AG04449 (cell line): ENCODE measurements at regions of chr1 and their contacts with region 1.

Region 1: DNA sequence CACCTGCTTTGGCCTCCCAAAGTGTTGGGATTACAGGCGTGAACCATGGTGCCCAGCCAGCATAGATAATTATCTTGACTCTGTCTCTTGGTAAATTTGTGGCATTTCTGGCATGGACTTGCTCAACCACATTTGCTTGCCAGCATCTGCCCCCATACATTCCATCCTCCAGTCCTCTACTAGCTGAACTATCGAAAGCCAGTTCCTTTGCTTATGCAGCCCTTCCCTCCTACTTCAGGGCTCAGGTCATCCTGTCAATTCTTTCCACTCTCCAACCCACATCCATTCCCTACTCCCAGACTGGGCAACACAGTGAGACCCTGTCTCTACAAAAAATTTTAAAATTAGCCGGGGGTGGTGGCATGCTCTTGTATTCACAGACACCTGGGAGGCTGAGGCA is 13.0 kb upstream of the UQCRHL start:
- DNase-seq: no peak
- H3K4me3 ChIP-seq: no peak overlapping the region
- CTCF ChIP-seq: no peak

Region 2: DNA sequence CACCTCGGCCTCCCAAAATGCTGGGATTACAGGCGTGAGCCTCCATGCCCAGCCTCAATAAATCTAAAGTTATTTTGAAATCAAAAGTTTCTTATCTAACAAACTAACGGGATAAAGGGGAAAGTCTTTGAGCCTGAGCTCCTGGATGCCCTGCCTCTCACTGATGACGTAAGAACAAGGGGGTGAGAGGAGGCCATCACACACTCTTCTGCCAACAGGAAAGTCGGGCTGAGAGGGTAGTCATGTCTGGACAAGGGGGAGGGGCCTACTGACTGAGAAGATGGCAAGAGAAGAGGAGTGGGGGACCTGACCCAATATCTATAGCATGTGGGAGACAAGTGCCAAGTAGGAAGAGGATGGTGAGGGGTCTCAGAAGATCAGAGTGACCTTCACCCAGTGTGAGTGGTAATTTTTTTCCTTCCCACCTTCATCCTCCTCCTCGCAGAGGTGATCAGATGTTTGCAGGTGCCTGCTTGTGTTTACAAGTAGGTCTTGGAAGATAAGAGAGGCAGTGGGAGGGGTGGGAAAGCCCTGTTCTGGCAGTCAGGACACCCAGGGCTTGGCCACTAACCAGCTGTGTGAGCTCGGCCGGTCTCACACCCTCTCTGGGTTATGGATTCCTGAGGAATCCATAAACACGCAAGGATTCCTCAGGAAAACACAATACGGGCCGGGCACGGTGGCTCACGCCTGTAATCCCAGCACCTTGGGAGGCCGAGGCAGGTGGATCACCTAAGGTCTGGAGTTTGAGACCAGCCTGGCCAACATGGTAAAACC is 22.7 kb before region 1 on chr1:
- CTCF ChIA-PET with region 1: interaction called, 80 read pairs
- POLR2A ChIA-PET with region 1: no interaction called
- DNase-seq: no peak
- H3K4me3 ChIP-seq: no peak overlapping the region
- CTCF ChIP-seq: no peak

Region 3: GRCh38 chr1:15835741-15836510 is 15.4 kb after region 1 on chr1:
- CTCF ChIA-PET with region 1: interaction called, 61 read pairs
- POLR2A ChIA-PET with region 1: interaction called, 4 read pairs
- DNase-seq: peak; percentile 91
- H3K4me3 ChIP-seq: peak overlapping the region; percentile 80
- CTCF ChIP-seq: no peak

Region 4: GRCh38 chr1:15949453-15950245 is 129.2 kb after region 1 on chr1:
- CTCF ChIA-PET with region 1: interaction called, 13 read pairs
- POLR2A ChIA-PET with region 1: interaction called, 3 read pairs
- DNase-seq: peak; percentile 85
- H3K4me3 ChIP-seq: peak overlapping the region; percentile 41
- CTCF ChIP-seq: no peak

Region 5: DNA sequence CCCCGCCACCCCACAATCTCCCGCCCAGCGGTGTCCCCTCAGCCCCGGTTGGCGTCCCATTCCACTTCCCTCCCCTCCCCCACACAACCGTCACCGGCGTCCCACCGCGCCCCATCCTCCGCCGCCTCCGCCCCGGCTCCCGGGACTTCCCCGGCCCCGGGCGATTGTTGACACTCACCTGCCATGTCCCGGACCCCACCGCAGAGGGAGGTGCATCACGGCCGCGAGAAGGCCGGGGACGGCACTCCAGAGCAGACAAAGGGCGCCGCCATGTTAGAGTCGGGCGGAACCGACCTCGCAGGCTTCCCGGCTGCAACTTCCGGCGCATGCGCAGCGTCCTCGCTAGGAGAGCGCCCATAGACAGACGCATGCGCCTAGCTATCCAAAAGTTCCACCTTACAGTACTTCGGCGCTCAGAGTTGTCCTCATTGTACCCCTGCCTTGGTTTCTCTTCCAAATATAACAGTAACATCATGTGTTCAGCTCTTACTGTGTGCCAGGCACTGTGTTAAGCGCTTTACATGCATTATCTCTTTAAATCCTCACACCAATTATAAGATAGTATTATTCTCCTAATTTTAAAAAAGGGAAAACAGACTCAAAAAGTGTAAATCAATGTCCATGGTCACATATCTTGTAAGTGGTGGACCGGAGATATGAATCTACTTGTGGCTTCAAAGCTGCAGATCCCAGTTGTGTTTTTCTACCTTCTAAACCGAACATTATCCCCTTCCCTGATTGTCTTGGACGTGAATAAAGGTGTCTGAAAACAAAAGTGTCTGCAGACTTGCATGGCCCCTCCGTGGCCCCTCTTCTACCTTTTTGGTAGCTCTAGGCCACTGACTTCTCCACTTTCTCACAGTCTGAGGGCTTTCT is 155.6 kb after region 1 on chr1 and contains the start of gene ZBTB17:
- CTCF ChIA-PET with region 1: interaction called, 13 read pairs
- POLR2A ChIA-PET with region 1: interaction called, 3 read pairs
- DNase-seq: no peak
- H3K4me3 ChIP-seq: peak within 1 kb of the TSS; percentile 76
- CTCF ChIP-seq: no peak

Region 6: GRCh38 chr1:15994590-15995351 is 174.3 kb after region 1 on chr1:
- CTCF ChIA-PET with region 1: interaction called, 66 read pairs
- POLR2A ChIA-PET with region 1: no interaction called
- DNase-seq: no peak
- H3K4me3 ChIP-seq: no peak overlapping the region
- CTCF ChIP-seq: peak; percentile 94

Region 7: DNA sequence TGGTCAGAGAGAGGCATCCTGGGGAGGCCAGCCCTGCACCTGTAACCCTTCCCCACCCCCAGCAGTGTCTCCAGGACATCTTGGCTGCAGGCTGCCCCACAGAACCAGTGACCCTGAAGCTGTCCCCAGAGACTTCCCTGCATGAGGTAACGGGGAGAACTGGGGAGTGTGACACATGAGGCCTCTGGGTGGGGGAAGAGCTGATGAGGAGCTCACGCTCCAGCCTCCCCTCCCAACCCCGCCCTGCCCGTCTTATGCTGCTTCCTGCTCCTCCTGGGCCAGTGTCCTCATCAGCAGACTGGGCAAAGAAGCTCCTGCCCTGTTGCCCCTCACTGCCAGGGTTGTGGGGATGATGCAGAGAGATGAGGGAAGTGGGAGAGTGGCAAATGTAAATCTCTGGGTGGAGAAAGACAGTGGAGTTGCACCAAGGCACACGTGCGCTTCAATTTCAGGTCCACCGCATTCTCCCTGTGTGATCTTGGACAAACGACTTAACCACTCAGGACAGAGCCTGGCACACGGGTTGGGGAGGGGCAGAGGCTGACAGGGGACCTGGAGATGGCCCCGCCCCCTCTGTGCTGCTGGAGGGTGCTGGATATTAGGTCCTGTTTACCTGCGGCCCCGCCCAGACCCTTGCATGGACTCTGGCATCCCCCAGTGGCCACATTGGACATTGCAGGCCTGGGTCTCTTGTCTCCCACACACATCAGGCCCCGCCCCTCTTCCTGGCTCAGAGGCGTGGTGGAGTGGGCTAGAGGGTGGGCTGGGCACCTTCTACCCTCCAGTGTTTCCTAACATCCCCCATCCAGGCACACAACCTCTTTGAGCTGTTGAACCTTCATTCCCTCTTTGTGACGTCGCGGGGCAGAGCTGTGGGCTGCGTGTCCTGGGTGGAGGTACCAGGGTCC is 235.4 kb after region 1 on chr1:
- CTCF ChIA-PET with region 1: interaction called, 11 read pairs
- POLR2A ChIA-PET with region 1: no interaction called
- DNase-seq: no peak
- H3K4me3 ChIP-seq: no peak overlapping the region
- CTCF ChIP-seq: peak; percentile 94